Activated T-helper 2 cell treated with anti-CD3 and anti-CD28 coated beads, Interferon-gamma antibody, Interleukin-2, Interleukin-4, amounts not matched to agents 10 μg/mL and 5 μg/mL and 100 μg/mL, durations not matched to agents 14 hours and 24 hours and 36 hours (primary cell): ENCODE measurements at regions of chr13 and their contacts with region 1.

Region 1: DNA sequence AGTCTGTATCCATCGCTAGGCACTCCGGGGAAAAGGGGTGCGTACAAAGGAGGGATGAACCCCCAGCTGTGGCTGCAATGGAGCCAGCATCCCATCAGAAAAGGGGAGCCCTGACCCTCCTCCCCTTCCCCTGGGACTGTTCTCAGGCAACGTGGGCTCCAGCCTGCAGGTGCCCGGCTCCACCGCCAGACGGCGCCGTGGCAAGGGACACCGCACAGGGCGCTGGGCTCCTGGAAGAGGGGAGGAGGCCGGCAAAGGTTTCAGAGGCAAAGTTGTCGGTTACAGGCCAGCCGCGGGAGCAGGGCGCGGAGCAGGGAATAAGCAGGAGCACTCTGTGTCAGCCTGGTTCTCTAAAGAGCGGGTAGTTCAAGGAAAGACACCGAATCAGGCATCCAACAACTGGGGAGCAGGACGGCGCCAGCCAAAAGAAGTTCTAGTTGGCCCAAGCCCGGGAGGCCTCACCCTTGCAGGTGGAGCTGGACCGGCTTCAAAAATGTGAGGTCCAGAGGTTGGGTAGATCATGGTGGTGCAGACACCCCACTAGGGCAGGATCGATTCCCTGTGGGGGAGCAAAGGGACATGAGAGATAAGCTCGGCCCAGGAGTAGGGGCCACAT is 53.0 kb upstream of the ATP12A start:
- DNase-seq: no peak
- H3K4me3 Mint-ChIP-seq: no peak overlapping the region
- H3K27ac Mint-ChIP-seq: no peak overlapping the region
- H3K4me1 Mint-ChIP-seq: peaks cover 36% of the 10 kb centered on the region
- H3K27me3 Mint-ChIP-seq: no peaks in the 10 kb centered on the region

Region 2: DNA sequence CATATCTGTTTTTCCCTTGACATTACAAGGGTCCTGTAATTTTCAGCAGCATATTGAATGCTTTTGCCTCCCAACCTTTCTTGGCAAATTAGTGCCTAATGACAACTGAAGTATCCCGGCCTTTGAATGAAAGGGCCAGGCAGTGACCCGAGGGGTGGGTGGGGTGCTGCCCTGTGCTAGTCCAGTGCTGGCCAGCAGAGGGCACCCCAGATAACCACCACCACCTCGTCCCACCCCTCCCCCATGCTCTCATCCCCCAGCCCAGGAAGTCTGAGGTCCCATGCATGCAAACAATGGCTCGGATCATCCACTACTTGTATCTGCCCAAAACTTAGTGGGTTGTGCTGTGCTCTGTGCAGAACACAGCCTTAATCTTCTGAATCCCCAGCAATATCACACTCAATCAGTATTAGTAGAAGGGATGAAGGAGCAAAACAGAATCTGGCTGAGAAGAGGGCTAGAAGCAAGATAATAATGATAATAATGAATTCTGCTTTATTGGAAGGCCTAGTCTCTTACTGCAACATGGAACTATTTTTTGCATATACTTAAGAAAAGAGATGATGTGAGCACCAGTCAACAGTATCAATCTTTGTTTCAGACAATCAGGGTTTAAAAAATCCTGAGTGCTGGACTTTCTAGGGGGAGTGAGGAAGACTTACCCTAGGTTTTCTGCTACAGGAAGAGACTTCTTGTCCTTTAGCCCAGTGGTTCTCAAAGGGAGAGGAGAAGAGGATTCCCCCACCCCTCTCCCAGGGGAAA is 56.8 kb after region 1 on chr13:
- intact Hi-C with region 1: loop called (anchors 5 kb)
- DNase-seq: peak; percentile 37
- H3K4me3 Mint-ChIP-seq: no peak overlapping the region
- H3K27ac Mint-ChIP-seq: peak overlapping the region; percentile 38
- H3K4me1 Mint-ChIP-seq: peaks cover 28% of the 10 kb centered on the region
- H3K27me3 Mint-ChIP-seq: peaks cover 47% of the 10 kb centered on the region

Region 3: GRCh38 chr13:25018729-25019115 is 391.5 kb after region 1 on chr13:
- intact Hi-C with region 1: no loop called
- DNase-seq: peak; percentile 18
- H3K4me3 Mint-ChIP-seq: peak overlapping the region; percentile 55
- H3K27ac Mint-ChIP-seq: no peak overlapping the region
- H3K4me1 Mint-ChIP-seq: peaks cover 6% of the 10 kb centered on the region
- H3K27me3 Mint-ChIP-seq: peaks cover 30% of the 10 kb centered on the region